ENCODE measurements at regions of chr12 and their contacts with region 1.

Region 1: GRCh38 chr12:14629832-14630710 is 62.4 kb upstream of the PLBD1 start:
- DNase-seq: peak; percentile 25 to 71 (median 55)
- ATAC-seq: peak; percentile 99
- H3K4me3 ChIP-seq: no peak overlapping the region
- H3K4me3 Mint-ChIP-seq: no peak overlapping the region
- H3K27ac ChIP-seq: no peak overlapping the region
- H3K27ac Mint-ChIP-seq: no peak overlapping the region
- H3K4me1 ChIP-seq: no peaks in the 10 kb centered on the region
- H3K4me1 Mint-ChIP-seq: no peaks in the 10 kb centered on the region
- H3K27me3 ChIP-seq: no peaks in the 10 kb centered on the region
- H3K27me3 Mint-ChIP-seq: peaks cover 0 to 35% (median 7%) of the 10 kb centered on the region in 5 donors

Region 2: DNA sequence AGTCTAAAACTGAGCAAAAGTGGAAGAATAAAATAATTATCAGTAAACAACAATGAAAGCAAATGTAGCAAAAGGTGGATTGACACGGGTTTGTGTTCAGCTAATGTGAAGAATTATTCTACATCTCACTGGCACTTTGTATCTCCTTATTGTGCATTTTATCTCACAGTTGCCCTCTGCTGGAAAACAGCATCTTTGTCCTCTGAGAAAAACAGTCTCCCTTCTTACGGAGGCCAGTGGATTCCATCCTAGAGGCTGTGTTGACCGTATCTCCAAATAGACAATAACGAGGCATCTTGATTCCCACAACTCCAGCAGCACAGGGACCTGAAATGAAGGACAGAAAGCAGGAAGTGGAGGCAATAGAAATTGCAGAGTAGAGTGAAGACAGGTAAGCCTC is 11.1 kb before region 1 on chr12:
- CTCF ChIA-PET with region 1: interaction called, 10 read pairs
- POLR2A ChIA-PET with region 1: no interaction called
- intact Hi-C with region 1: no loop called
- DNase-seq: peak in 3 of 9 donors; percentile 3 to 19 (median 10)
- ATAC-seq: no peak
- H3K4me3 ChIP-seq: no peak overlapping the region
- H3K4me3 Mint-ChIP-seq: peak overlapping the region in 1 of 10 donors; percentile 19
- H3K27ac ChIP-seq: no peak overlapping the region
- H3K27ac Mint-ChIP-seq: no peak overlapping the region
- H3K4me1 ChIP-seq: no peaks in the 10 kb centered on the region
- H3K4me1 Mint-ChIP-seq: peaks cover 0 to 4% (median 0%) of the 10 kb centered on the region in 7 donors
- H3K27me3 ChIP-seq: no peaks in the 10 kb centered on the region
- H3K27me3 Mint-ChIP-seq: peaks cover 2 to 22% (median 21%) of the 10 kb centered on the region in 5 donors

Region 3: DNA sequence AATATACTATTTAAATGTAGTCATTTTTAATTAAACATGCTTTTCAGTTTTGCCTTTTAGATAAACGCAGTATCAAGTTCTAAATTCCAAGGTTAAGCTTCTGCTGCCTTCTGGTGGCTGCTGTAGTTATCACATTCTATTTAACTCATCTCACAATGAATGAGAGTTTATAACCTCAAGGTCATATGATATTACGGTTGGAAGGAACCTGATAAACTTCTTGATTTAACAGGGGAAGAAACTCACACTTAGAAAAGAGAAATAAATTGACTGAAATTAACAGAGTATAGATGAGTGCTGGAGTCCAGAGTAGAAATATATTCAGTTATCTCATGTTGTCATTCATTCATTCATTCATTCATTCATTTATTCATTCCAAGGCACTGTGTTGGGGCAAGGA is 34.4 kb after region 1 on chr12:
- CTCF ChIA-PET with region 1: interaction called, 13 read pairs
- POLR2A ChIA-PET with region 1: no interaction called
- intact Hi-C with region 1: loop called (anchors 1 kb)
- DNase-seq: peak in 7 of 9 donors; percentile 29 to 64 (median 48)
- ATAC-seq: peak; percentile 83
- H3K4me3 ChIP-seq: no peak overlapping the region
- H3K4me3 Mint-ChIP-seq: no peak overlapping the region
- H3K27ac ChIP-seq: no peak overlapping the region
- H3K27ac Mint-ChIP-seq: no peak overlapping the region
- H3K4me1 ChIP-seq: no peaks in the 10 kb centered on the region
- H3K4me1 Mint-ChIP-seq: peaks cover 0 to 9% (median 8%) of the 10 kb centered on the region in 7 donors
- H3K27me3 ChIP-seq: peaks cover 0 to 4% of the 10 kb centered on the region in 2 donors
- H3K27me3 Mint-ChIP-seq: peaks cover 0 to 14% (median 5%) of the 10 kb centered on the region in 5 donors

Region 4: GRCh38 chr12:15220994-15221885 is 591.2 kb after region 1 on chr12 and contains the start of gene RERG:
- CTCF ChIA-PET with region 1: no interaction called
- POLR2A ChIA-PET with region 1: no interaction called
- intact Hi-C with region 1: loop called in 1 of 2 experiments (anchors 1 kb)
- DNase-seq: peak; percentile 57 to 86 (median 77)
- ATAC-seq: peak; percentile 99
- H3K4me3 ChIP-seq: peak within 1 kb of the TSS; percentile 43
- H3K4me3 Mint-ChIP-seq: peak within 1 kb of the TSS; percentile 61 to 83 (median 78)
- H3K27ac ChIP-seq: no peak within 1 kb of the TSS
- H3K27ac Mint-ChIP-seq: no peak within 1 kb of the TSS
- H3K4me1 ChIP-seq: peaks cover 6% of the 10 kb centered on the region in 2 donors
- H3K4me1 Mint-ChIP-seq: peaks cover 0 to 17% (median 9%) of the 10 kb centered on the region in 7 donors
- H3K27me3 ChIP-seq: no peaks in the 10 kb centered on the region
- H3K27me3 Mint-ChIP-seq: peaks cover 25 to 43% (median 32%) of the 10 kb centered on the region in 5 donors
- total RNA-seq, gene RERG: 0.35 TPM in 1 of 5 experiments, not detected in the others

Region 5: GRCh38 chr12:15546102-15546701 is 916.1 kb after region 1 on chr12:
- CTCF ChIA-PET with region 1: no interaction called
- POLR2A ChIA-PET with region 1: no interaction called
- intact Hi-C with region 1: loop called in 1 of 2 experiments (anchors 10 kb)
- DNase-seq: peak in 7 of 9 donors; percentile 73 to 89 (median 85)
- ATAC-seq: peak; percentile 93
- H3K4me3 ChIP-seq: no peak overlapping the region
- H3K4me3 Mint-ChIP-seq: peak overlapping the region; percentile 36 to 85 (median 76)
- H3K27ac ChIP-seq: peak overlapping the region; percentile 74
- H3K27ac Mint-ChIP-seq: peak overlapping the region; percentile 95 to 100 (median 98)
- H3K4me1 ChIP-seq: peaks cover 0 to 50% of the 10 kb centered on the region in 2 donors
- H3K4me1 Mint-ChIP-seq: peaks cover 30 to 98% (median 86%) of the 10 kb centered on the region in 7 donors
- H3K27me3 ChIP-seq: peaks cover 0 to under 1% of the 10 kb centered on the region in 2 donors
- H3K27me3 Mint-ChIP-seq: no peaks in the 10 kb centered on the region

Measured in naive thymus-derived CD4-positive, alpha-beta T cell (primary cell).